ENCODE measurements at regions of chr15 and their contacts with region 1.

Region 1: GRCh38 chr15:81274931-81275707 is 48.8 kb downstream of the STARD5 start:
- DNase-seq: peak; percentile 59 to 86 (median 78)
- ATAC-seq: peak; percentile 94
- H3K4me3 ChIP-seq: no peak overlapping the region
- H3K4me3 Mint-ChIP-seq: peak overlapping the region; percentile 13 to 75 (median 60)
- H3K27ac ChIP-seq: peak overlapping the region; percentile 52
- H3K27ac Mint-ChIP-seq: peak overlapping the region; percentile 24 to 90 (median 84)
- H3K4me1 ChIP-seq: peaks cover 0 to 27% of the 10 kb centered on the region in 2 donors
- H3K4me1 Mint-ChIP-seq: peaks cover 21 to 59% (median 54%) of the 10 kb centered on the region in 7 donors
- H3K27me3 ChIP-seq: no peaks in the 10 kb centered on the region
- H3K27me3 Mint-ChIP-seq: no peaks in the 10 kb centered on the region

Region 2: GRCh38 chr15:81296673-81297072 is 21.6 kb after region 1 on chr15:
- CTCF ChIA-PET with region 1: interaction called, 128 read pairs
- POLR2A ChIA-PET with region 1: interaction called, 642 read pairs
- intact Hi-C with region 1: loop called (anchors 1 kb)
- DNase-seq: peak; percentile 38 to 87 (median 81)
- ATAC-seq: peak; percentile 69
- H3K4me3 ChIP-seq: peak overlapping the region; percentile 74
- H3K4me3 Mint-ChIP-seq: peak overlapping the region; percentile 80 to 100 (median 98)
- H3K27ac ChIP-seq: peak overlapping the region; percentile 87
- H3K27ac Mint-ChIP-seq: peak overlapping the region; percentile 93 to 100 (median 96)
- H3K4me1 ChIP-seq: peaks cover 52 to 59% of the 10 kb centered on the region in 2 donors
- H3K4me1 Mint-ChIP-seq: peaks cover 34 to 66% (median 64%) of the 10 kb centered on the region in 7 donors
- H3K27me3 ChIP-seq: no peaks in the 10 kb centered on the region
- H3K27me3 Mint-ChIP-seq: no peaks in the 10 kb centered on the region

Region 3: DNA sequence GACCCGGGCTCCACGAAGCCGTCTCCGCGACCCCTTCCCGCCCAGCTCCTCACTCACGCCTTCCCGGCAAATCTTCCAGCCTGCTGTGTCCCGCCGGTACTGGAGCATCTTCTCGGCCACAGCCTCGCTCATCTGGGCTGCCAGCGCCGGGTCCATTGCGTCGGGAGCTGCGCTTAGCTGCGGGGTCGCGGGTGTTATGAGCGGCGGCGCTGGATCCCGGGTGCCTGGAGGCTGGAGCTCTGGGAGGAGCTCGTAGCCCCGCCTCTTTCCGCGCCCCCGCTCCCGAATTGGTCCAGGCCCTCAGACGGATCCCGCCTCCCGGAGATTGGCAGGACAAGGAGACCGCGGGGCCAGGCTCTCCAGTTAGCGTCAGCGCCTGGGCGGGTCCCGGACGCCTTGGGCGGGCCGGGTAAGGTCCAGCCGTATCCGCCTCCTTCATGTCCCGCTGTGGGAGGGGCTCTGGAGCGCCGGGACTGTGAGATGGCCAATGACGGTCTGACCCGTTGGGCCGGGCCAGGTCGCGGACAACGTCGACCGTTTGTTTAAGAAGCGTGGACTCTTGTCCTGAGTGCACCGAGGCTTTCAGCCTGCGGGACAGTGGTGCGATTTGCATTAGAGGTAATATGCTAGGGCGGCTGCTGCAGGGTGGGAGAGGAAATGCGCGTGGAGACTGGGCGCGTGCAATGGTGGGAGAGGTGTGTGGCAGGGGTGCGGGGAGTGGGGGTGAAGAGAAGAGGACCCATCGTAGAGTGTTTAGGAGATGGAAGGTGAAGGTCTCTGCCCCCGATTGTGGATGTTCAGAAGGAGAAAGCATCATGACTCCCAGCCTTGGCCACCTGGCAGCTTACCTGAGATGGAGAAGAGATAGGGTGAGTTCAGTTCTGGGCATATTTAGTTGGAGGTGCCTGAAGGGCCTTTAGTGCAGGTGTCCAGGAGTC is 49.1 kb after region 1 on chr15 and contains the start of gene STARD5:
- CTCF ChIA-PET with region 1: interaction called, 8 read pairs
- POLR2A ChIA-PET with region 1: interaction called, 11 read pairs
- intact Hi-C with region 1: loop called (anchors 5 kb)
- DNase-seq: peak; percentile 82 to 97 (median 92)
- ATAC-seq: peak; percentile 99
- H3K4me3 ChIP-seq: peak within 1 kb of the TSS; percentile 86
- H3K4me3 Mint-ChIP-seq: peak within 1 kb of the TSS; percentile 90 to 98 (median 94)
- H3K27ac ChIP-seq: peak within 1 kb of the TSS; percentile 78
- H3K27ac Mint-ChIP-seq: peak within 1 kb of the TSS; percentile 87 to 97 (median 92)
- H3K4me1 ChIP-seq: peaks cover 5 to 20% of the 10 kb centered on the region in 2 donors
- H3K4me1 Mint-ChIP-seq: peaks cover 31 to 65% (median 60%) of the 10 kb centered on the region in 7 donors
- H3K27me3 ChIP-seq: no peaks in the 10 kb centered on the region
- H3K27me3 Mint-ChIP-seq: no peaks in the 10 kb centered on the region
- total RNA-seq, gene STARD5: 5.0 to 11.7 (median 10.1) TPM

Region 4: DNA sequence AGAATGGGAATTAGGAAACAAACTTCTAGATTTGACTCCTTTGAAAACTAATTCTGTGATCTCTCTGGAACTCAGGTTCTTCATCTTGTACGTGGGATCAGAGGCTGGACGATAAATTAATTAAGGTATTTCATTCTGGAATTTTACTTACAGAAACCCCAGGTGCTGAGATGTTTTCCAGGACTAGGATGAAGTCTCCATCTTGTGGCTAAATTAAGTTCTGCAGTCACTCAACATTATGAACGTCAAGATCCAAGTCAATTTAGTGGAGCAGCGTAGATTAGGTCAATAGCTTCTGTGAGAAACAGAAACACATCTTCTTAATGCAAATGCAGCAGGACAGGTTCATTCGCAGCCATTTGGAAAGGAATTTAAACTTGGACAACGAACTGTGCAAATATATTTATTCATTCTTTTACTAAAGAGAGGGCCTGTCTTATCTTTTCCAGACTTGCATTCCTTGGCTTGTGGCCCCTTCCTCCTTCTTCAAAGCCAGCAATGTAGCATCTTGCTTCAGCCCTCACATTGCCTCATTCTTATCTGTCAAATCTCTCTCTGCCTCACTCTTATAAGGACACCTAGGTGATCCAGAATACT is 125.6 kb after region 1 on chr15:
- CTCF ChIA-PET with region 1: interaction called, 67 read pairs
- POLR2A ChIA-PET with region 1: interaction called, 5 read pairs
- intact Hi-C with region 1: loop called (anchors 1 kb)
- DNase-seq: peak in 6 of 9 donors; percentile 20 to 59 (median 52)
- ATAC-seq: peak; percentile 67
- H3K4me3 ChIP-seq: no peak overlapping the region
- H3K4me3 Mint-ChIP-seq: no peak overlapping the region
- H3K27ac ChIP-seq: no peak overlapping the region
- H3K27ac Mint-ChIP-seq: no peak overlapping the region
- H3K4me1 ChIP-seq: no peaks in the 10 kb centered on the region
- H3K4me1 Mint-ChIP-seq: peaks cover 0 to 5% (median 1%) of the 10 kb centered on the region in 7 donors
- H3K27me3 ChIP-seq: peaks cover 0 to 3% of the 10 kb centered on the region in 2 donors
- H3K27me3 Mint-ChIP-seq: peaks cover 0 to 15% (median 0%) of the 10 kb centered on the region in 5 donors

Measured in naive thymus-derived CD4-positive, alpha-beta T cell (primary cell).